Heart left ventricle (tissue), 16 donors: ENCODE measurements at regions of chr1 and their contacts with region 1.

Region 1: DNA sequence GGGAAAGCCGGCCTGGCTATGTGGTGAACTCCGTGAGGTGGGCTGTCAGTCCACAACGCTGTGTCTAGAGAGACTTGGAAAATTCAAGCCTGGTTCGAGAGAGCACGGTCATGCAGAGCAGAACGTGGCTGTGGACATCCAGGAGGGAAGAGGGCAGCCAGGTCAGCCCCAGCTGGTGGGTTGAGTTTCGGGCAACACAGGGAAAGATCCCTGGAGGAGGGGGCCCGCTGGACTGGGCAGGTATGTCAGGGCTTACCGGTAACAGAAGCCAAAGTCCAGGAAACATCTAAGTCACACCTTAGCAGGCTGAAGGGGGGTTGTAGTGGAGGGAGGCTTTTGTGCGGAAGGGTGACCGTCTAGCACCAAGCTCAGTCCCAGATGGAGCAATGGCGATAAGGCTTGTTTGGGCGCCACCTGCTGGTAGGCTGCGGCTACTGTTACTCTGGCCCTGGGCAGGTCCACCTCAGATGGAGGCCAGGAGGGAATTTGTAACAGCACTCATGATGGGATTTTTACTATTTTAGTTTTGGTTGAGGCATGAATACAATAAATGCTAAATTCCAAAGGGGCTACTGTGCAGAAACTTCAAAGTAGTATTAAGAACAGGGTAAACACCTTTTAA is 143.3 kb upstream of the ZNF644 start:
- DNase-seq: peak; percentile 60 to 80 (median 66)
- ATAC-seq: peak; percentile 78 to 96 (median 90)
- H3K4me3 ChIP-seq: no peak overlapping the region
- H3K27ac ChIP-seq: no peak overlapping the region
- H3K4me1 ChIP-seq: no peaks in the 10 kb centered on the region
- H3K27me3 ChIP-seq: peaks cover 0 to 8% (median 0%) of the 10 kb centered on the region in 9 donors
- CTCF ChIP-seq: peak; percentile 79 to 94 (median 87)
- POLR2A ChIP-seq: no peak

Region 2: DNA sequence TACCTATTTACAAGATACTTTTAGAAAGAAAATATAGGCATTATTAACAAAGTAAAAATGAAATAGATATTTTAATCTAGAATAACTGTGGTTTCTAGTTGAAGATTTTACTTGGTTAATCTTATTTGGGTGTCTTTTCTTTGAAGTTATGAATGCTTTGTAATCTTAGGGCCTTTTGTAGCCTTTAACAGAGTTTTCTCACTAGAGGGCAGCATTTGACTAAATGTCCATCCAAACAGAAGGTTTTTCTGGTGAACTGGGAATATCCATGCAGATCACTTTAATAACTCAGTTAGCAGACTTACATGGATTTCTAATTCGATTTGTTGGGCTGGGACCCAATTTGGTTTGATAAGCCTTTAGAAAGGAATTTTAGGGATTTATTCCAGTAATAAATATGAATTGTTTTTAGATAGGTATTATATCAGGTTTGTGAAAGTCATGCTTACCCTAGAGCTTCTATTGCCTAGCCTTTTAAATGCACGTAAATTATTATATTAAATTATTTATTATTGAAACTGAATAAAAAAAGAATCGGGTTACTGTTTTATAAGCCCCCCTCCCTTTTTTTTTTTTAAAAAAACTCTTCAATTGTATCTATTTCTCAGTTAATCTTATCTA is 1050.5 kb before region 1 on chr1:
- intact Hi-C with region 1: loop called in 7 of 10 experiments (anchors 10 kb)
- DNase-seq: no peak
- ATAC-seq: no peak
- H3K4me3 ChIP-seq: no peak overlapping the region
- H3K27ac ChIP-seq: no peak overlapping the region
- H3K4me1 ChIP-seq: no peaks in the 10 kb centered on the region
- H3K27me3 ChIP-seq: peaks cover 0 to 31% (median 8%) of the 10 kb centered on the region in 9 donors
- CTCF ChIP-seq: peak; percentile 39 to 75 (median 58)
- POLR2A ChIP-seq: no peak

Region 3: GRCh38 chr1:90579212-90579802 is 585.8 kb before region 1 on chr1:
- intact Hi-C with region 1: loop called in 7 of 10 experiments (anchors 2 to 10 kb)
- DNase-seq: no peak
- ATAC-seq: no peak
- H3K4me3 ChIP-seq: no peak overlapping the region
- H3K27ac ChIP-seq: no peak overlapping the region
- H3K4me1 ChIP-seq: no peaks in the 10 kb centered on the region
- H3K27me3 ChIP-seq: peaks cover 0 to 41% (median 3%) of the 10 kb centered on the region in 9 donors
- CTCF ChIP-seq: peak; percentile 42 to 75 (median 67)
- POLR2A ChIP-seq: no peak

Region 4: DNA sequence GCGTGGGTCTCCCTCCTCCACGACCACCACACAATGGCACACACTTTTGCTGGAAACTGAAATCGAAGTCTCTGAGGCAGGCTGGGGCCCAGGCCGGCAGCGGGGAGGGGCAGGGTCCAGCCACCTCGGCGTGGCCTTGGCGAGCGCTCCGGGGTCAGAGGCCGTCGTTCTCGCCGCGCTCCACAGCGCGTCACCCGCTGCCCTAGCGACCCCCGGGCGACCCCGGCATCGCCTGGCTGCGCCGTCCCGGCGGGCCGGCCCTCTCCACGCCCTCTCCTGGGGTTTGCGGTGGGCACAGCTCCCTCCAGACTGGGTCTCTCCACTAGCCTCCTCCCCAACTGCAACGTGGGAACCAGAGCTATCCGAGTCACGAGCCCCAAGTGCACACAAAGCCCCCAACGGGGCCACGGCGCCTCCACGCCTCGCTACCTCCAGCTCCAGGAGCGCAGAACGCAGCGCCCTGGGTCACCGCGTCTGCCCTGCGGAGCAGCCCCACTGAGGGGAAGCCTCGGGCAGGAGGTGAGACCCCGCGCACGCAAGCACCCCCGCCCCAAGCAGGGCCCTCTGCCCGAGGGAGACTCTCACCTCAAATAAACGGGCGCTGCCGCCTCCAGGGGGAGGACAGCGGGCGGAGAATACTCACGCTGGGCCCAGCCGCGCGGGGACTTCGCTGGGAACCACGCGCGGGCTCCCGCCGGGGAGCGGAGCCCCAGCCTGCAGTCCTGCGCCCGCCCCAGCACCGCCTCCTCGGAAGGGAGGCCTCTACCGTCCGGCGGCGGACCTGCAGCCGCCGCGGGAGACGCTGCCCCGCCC is 314.0 kb before region 1 on chr1:
- intact Hi-C with region 1: loop called in 1 of 10 experiments (anchors 5 kb)
- DNase-seq: peak; percentile 83 to 90 (median 85)
- ATAC-seq: peak; percentile 92 to 100 (median 98)
- H3K4me3 ChIP-seq: peak overlapping the region; percentile 57 to 96 (median 83)
- H3K27ac ChIP-seq: peak overlapping the region in 9 of 12 donors; percentile 2 to 76 (median 60)
- H3K4me1 ChIP-seq: peaks cover 0 to 13% (median 0%) of the 10 kb centered on the region in 12 donors
- H3K27me3 ChIP-seq: peaks cover 0 to 10% (median 0%) of the 10 kb centered on the region in 9 donors
- CTCF ChIP-seq: peak; percentile 60 to 94 (median 88)
- POLR2A ChIP-seq: peak in 1 of 2 donors; percentile 41

Region 5: GRCh38 chr1:91021686-91022517 is 143.2 kb before region 1 on chr1 and contains the start of gene ZNF644:
- intact Hi-C with region 1: loop called in 2 of 10 experiments (anchors 5 kb)
- DNase-seq: peak; percentile 92 to 95 (median 95)
- ATAC-seq: peak; percentile 93 to 97 (median 96)
- H3K4me3 ChIP-seq: peak within 1 kb of the TSS; percentile 66 to 97 (median 88)
- H3K27ac ChIP-seq: peak within 1 kb of the TSS; percentile 95 to 100 (median 100)
- H3K4me1 ChIP-seq: peaks cover 0 to 54% (median 40%) of the 10 kb centered on the region in 12 donors
- H3K27me3 ChIP-seq: no peaks in the 10 kb centered on the region
- CTCF ChIP-seq: no peak
- POLR2A ChIP-seq: peak; percentile 16 to 75
- total RNA-seq, gene ZNF644: 23.1 to 46.6 (median 33.9) TPM

Region 6: GRCh38 chr1:91201176-91201575 is 36.0 kb after region 1 on chr1:
- intact Hi-C with region 1: no loop called
- DNase-seq: no peak
- ATAC-seq: no peak
- H3K4me3 ChIP-seq: no peak overlapping the region
- H3K27ac ChIP-seq: no peak overlapping the region
- H3K4me1 ChIP-seq: no peaks in the 10 kb centered on the region
- H3K27me3 ChIP-seq: peaks cover 0 to 8% (median 0%) of the 10 kb centered on the region in 9 donors
- CTCF ChIP-seq: no peak
- POLR2A ChIP-seq: no peak

Region 7: GRCh38 chr1:91404151-91405012 is 239.2 kb after region 1 on chr1 and contains the start of gene HFM1:
- intact Hi-C with region 1: loop called in 1 of 10 experiments (anchors 10 kb)
- DNase-seq: peak; percentile 81 to 90 (median 90)
- ATAC-seq: peak; percentile 97 to 99 (median 99)
- H3K4me3 ChIP-seq: peak within 1 kb of the TSS; percentile 49 to 86 (median 64)
- H3K27ac ChIP-seq: peak within 1 kb of the TSS; percentile 44 to 91 (median 86)
- H3K4me1 ChIP-seq: peaks cover 0 to 19% (median 0%) of the 10 kb centered on the region in 12 donors
- H3K27me3 ChIP-seq: peaks cover 0 to 17% (median 0%) of the 10 kb centered on the region in 9 donors
- CTCF ChIP-seq: peak in 4 of 12 donors; percentile 28 to 42 (median 34)
- POLR2A ChIP-seq: peak in 1 of 2 donors; percentile 60
- total RNA-seq, gene HFM1: 1.5 to 5.8 (median 2.4) TPM